ENCODE measurements at regions of chr2 and their contacts with region 1.

Region 1: GRCh38 chr2:197813093-197813787 is 8.8 kb downstream of the PLCL1 start:
- DNase-seq: no peak
- H3K4me3 ChIP-seq: no peak overlapping the region
- H3K27ac ChIP-seq: no peak overlapping the region
- H3K27me3 ChIP-seq: peaks cover 8% of the 10 kb centered on the region
- CTCF ChIP-seq: peak; percentile 66

Region 2: DNA sequence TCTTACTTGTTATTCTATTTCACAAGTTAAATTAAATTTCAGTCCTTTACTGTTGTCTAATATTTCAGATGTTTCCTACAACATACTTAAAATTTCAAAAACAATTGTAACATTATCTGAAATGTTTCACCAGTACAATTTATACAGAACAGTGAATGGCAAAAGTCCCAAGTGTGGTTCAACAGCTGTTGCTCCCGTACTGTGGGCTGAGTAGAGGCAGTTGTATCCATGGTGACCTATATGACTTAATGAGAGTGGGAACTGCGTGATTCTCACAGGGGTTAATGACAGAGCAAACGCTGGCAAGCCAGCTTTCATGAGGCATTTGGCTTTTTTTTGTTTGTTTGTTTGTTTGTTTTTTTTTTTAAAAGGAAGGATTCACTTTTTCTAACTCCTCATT is 14.2 kb before region 1 on chr2:
- CTCF ChIA-PET with region 1: interaction called, 10 read pairs
- POLR2A ChIA-PET with region 1: no interaction called
- DNase-seq: no peak
- H3K4me3 ChIP-seq: no peak overlapping the region
- H3K27ac ChIP-seq: no peak overlapping the region
- H3K27me3 ChIP-seq: peaks cover 8% of the 10 kb centered on the region
- CTCF ChIP-seq: no peak

Region 3: GRCh38 chr2:197828464-197829135 is 15.4 kb after region 1 on chr2:
- CTCF ChIA-PET with region 1: interaction called, 14 read pairs
- POLR2A ChIA-PET with region 1: no interaction called
- DNase-seq: no peak
- H3K4me3 ChIP-seq: no peak overlapping the region
- H3K27ac ChIP-seq: no peak overlapping the region
- H3K27me3 ChIP-seq: no peaks in the 10 kb centered on the region
- CTCF ChIP-seq: no peak

Region 4: DNA sequence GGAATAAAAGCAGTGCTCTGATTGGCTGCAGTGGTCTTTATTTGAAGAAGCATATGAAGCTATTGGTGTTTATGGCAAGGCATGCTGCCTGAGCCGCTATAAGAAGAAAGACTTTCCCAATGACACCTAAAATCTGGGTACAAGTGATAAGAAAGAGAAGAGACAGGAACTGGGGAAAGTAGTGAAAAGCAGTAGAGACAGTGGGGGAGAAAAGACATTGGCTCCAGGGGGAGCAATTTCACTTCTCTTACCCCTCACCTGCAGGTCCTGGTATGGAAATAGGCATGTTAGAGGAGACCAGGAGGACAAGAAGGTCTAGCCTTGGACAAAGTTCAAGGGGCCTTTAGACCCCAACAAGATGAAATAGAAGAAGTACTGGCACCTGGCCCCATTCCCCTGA is 38.2 kb after region 1 on chr2:
- CTCF ChIA-PET with region 1: interaction called, 10 read pairs
- POLR2A ChIA-PET with region 1: no interaction called
- DNase-seq: no peak
- H3K4me3 ChIP-seq: no peak overlapping the region
- H3K27ac ChIP-seq: no peak overlapping the region
- H3K27me3 ChIP-seq: no peaks in the 10 kb centered on the region
- CTCF ChIP-seq: 0 out of 2 replicates have a peak, but pooled peaks have one; percentile 6

Measured in AG04450 (cell line).